Activated CD4-positive, alpha-beta memory T cell treated with anti-CD3 and anti-CD28 coated beads for 36 hours (primary cell): ENCODE measurements at regions of chr15 and their contacts with region 1.

Region 1: DNA sequence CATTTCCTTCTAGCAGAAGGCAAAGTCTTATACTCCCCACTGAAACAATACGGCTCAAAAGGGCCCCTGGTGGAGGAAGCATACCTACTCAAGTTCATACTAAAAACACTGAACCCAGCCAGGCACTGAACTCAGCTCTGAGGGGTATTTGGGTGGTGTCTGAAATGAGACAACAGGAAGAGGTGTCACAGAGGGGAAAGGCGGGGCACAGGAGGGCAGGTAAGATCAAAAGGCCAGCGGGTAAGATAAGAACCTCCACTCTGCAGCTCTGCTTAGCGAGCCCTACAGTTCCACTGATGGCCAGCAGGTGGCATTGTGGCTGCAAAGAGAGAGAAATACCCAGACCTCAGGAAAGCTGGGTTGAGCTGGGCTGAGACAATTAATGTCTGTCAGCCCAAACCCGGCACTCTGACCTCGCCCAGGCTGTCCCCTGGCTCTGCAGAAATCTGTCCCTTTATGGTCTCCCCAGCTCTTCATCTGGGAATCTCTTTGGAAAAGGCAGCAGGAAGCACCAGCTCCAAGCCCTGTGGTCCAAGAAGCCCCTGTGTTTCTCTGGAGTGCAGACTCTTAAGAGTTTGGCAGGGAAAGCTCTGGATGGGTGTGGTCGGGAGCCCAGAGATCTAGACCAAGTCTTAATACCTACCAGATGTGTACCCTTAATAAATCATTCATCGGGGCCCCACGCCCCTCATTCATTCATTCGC is 8.4 kb downstream of the MFGE8 start:
- DNase-seq: peak; percentile 96
- H3K4me3 Mint-ChIP-seq: no peak overlapping the region
- H3K27ac Mint-ChIP-seq: peak overlapping the region; percentile 30
- H3K4me1 Mint-ChIP-seq: peaks cover 33% of the 10 kb centered on the region
- H3K27me3 Mint-ChIP-seq: no peaks in the 10 kb centered on the region

Region 2: DNA sequence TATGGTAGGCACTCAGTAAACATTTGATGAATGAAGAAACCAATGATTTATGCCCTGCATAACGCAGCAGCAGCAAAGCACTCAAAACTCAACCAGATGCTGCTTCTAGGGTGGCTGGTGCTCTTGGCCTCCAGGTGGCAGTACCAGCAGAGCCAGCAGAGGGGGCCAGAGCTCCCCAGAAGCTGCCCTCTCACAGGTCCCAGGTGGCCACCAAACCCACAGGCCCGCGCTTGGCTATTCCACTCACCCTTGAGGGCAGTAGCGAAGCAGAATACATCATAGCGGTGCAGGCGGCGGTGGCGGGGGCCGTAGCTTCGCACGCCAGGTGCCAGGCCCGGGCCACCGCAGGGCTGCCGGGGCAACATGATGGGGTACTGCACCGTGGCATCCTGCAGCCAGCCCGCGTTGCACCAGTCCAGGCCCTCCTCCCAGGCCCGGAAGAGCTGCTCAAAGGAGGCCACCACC is 26.0 kb before region 1 on chr15:
- CTCF ChIA-PET with region 1: interaction called, 15 read pairs
- POLR2A ChIA-PET with region 1: no interaction called
- intact Hi-C with region 1: no loop called
- DNase-seq: peak; percentile 58
- H3K4me3 Mint-ChIP-seq: no peak overlapping the region
- H3K27ac Mint-ChIP-seq: no peak overlapping the region
- H3K4me1 Mint-ChIP-seq: no peaks in the 10 kb centered on the region
- H3K27me3 Mint-ChIP-seq: no peaks in the 10 kb centered on the region

Region 3: GRCh38 chr15:88982304-88982945 is 77.6 kb after region 1 on chr15:
- CTCF ChIA-PET with region 1: interaction called, 10 read pairs
- POLR2A ChIA-PET with region 1: no interaction called
- intact Hi-C with region 1: no loop called
- DNase-seq: no peak
- H3K4me3 Mint-ChIP-seq: no peak overlapping the region
- H3K27ac Mint-ChIP-seq: no peak overlapping the region
- H3K4me1 Mint-ChIP-seq: no peaks in the 10 kb centered on the region
- H3K27me3 Mint-ChIP-seq: no peaks in the 10 kb centered on the region

Region 4: GRCh38 chr15:89017370-89018066 is 112.7 kb after region 1 on chr15:
- CTCF ChIA-PET with region 1: interaction called, 97 read pairs
- POLR2A ChIA-PET with region 1: no interaction called
- intact Hi-C with region 1: loop called (anchors 1 kb)
- DNase-seq: peak; percentile 90
- H3K4me3 Mint-ChIP-seq: peak overlapping the region; percentile 43
- H3K27ac Mint-ChIP-seq: no peak overlapping the region
- H3K4me1 Mint-ChIP-seq: peaks cover 15% of the 10 kb centered on the region
- H3K27me3 Mint-ChIP-seq: peaks cover 2% of the 10 kb centered on the region

Region 5: GRCh38 chr15:89129123-89129815 is 224.5 kb after region 1 on chr15:
- CTCF ChIA-PET with region 1: interaction called, 15 read pairs
- POLR2A ChIA-PET with region 1: no interaction called
- intact Hi-C with region 1: no loop called
- DNase-seq: peak; percentile 68
- H3K4me3 Mint-ChIP-seq: no peak overlapping the region
- H3K27ac Mint-ChIP-seq: no peak overlapping the region
- H3K4me1 Mint-ChIP-seq: peaks cover 29% of the 10 kb centered on the region
- H3K27me3 Mint-ChIP-seq: no peaks in the 10 kb centered on the region

Region 6: DNA sequence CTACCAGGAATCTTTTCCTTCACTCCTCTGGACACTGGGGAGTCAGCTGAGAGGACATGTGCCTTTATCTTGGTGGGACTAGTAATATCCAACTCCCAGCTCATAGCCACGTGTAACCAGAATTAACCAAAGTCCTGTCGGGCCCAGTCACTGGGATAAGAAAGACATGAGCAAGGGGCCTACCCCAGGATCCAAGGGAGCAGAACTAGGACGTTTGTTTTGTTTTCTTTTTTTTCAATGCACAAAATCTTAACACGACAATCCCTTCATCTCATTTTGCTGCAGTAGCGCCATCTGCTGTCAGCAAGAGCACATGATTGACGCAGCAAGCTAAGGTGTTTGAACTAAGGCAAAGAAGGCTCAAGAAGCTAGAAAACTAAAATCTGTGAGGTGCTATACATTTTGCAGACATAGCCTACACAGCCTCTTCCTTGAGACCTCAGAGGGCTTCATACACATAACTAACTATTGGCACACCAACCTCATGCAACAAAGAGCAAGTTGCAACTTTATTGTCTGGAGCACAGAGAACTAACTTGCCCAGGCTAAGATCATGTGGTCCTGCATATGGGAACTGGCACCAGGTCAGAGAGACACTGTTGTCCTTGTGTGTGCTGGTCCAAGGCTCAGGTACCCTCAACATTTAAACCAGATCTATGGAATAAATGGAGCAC is 273.0 kb after region 1 on chr15:
- CTCF ChIA-PET with region 1: interaction called, 22 read pairs
- POLR2A ChIA-PET with region 1: no interaction called
- intact Hi-C with region 1: no loop called
- DNase-seq: peak; percentile 77
- H3K4me3 Mint-ChIP-seq: no peak overlapping the region
- H3K27ac Mint-ChIP-seq: no peak overlapping the region
- H3K4me1 Mint-ChIP-seq: peaks cover 39% of the 10 kb centered on the region
- H3K27me3 Mint-ChIP-seq: no peaks in the 10 kb centered on the region